Common myeloid progenitor, CD34-positive (primary cell): ENCODE measurements at regions of chr1 and their contacts with region 1.

Region 1: GRCh38 chr1:203038891-203039608 is 12.8 kb downstream of the PPFIA4 start:
- DNase-seq: peak; percentile 54 to 74 (median 64)
- H3K4me3 ChIP-seq: no peak overlapping the region
- H3K27ac ChIP-seq: no peak overlapping the region
- H3K4me1 ChIP-seq: peaks cover 0 to 26% (median 16%) of the 10 kb centered on the region in 4 experiments
- H3K27me3 ChIP-seq: peaks cover 0 to 13% (median 0%) of the 10 kb centered on the region in 5 experiments

Region 2: DNA sequence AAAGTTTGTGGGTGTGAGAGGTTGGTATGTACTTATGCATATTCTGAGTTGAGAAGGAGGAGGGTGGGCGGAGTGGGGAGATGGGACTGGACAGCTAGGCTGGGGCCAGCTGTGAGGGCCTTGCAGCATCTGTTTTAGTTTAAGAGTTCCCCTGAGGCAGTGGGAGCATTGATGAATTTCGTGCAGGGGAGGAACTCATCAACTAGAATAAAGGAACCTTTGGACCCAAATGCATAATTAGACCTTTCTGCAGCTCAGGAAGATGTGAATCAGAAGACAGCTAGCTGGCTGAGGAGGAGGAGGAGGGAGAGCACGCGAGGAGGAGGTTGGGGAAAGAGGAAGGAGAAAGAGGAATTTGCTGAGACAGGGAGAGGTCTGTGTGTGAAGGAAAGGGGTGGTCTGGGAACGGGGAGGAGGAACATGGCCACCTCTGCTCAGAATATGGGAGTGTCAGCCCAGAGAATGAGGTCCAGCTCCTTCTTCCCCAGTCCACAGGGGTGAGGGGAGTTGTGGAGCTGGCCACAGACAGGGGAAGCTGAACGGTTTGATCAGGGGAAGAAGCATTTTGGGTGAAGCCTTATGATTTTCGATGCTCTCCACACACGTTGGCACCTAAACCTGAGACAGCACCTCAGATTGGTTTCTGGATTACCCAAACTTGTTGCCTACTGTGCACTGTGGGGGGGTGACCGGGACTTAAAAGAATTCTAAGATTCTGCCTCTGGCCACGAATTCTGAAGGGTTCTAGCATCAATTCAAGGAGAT is 19.0 kb after region 1 on chr1:
- CTCF ChIA-PET with region 1: interaction called, 88 read pairs
- POLR2A ChIA-PET with region 1: no interaction called
- DNase-seq: peak in 1 of 3 donors; percentile 10
- H3K4me3 ChIP-seq: no peak overlapping the region
- H3K27ac ChIP-seq: no peak overlapping the region
- H3K4me1 ChIP-seq: peaks cover 0 to 28% (median 19%) of the 10 kb centered on the region in 4 experiments
- H3K27me3 ChIP-seq: peaks cover 0 to 1% (median 0%) of the 10 kb centered on the region in 5 experiments

Region 3: DNA sequence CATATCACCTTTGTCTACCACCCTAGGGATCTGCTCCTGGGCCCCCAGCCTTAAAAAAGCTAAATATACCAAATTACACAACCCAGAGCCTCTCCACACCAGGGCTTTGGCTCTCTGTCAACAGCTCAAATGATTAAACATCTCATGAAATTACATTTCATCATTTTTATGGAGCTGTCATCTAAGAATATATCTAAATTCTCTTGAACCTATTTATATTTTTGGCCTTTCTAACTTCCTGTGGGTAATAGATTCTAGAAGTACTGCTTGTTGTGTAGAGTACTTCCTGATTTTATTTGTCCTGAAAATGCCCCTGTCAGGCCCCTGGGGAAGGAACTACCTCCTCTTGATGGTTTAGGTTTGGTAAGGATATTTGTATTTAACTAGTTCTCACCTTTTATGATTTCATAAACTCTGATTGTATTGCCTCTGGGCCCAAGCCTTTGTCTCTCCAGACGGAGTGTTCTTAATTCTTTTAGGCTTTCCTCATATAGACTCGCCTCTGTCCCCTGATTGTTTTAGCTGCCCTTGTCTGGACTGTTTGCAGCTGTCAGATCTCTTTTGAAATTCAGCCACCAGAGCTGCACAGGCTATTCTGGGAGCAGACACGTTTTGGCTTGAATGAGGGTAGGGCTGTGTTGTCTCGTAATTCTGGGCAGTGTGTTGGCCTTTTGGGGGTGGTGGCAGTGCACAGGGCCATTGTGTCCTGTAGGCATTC is 30.1 kb after region 1 on chr1:
- CTCF ChIA-PET with region 1: interaction called, 15 read pairs
- POLR2A ChIA-PET with region 1: no interaction called
- DNase-seq: peak in 2 of 3 donors; percentile 54 to 55
- H3K4me3 ChIP-seq: no peak overlapping the region
- H3K27ac ChIP-seq: no peak overlapping the region
- H3K4me1 ChIP-seq: peaks cover 1 to 19% (median 15%) of the 10 kb centered on the region in 4 experiments
- H3K27me3 ChIP-seq: peaks cover 0 to 16% (median 0%) of the 10 kb centered on the region in 5 experiments

Region 4: DNA sequence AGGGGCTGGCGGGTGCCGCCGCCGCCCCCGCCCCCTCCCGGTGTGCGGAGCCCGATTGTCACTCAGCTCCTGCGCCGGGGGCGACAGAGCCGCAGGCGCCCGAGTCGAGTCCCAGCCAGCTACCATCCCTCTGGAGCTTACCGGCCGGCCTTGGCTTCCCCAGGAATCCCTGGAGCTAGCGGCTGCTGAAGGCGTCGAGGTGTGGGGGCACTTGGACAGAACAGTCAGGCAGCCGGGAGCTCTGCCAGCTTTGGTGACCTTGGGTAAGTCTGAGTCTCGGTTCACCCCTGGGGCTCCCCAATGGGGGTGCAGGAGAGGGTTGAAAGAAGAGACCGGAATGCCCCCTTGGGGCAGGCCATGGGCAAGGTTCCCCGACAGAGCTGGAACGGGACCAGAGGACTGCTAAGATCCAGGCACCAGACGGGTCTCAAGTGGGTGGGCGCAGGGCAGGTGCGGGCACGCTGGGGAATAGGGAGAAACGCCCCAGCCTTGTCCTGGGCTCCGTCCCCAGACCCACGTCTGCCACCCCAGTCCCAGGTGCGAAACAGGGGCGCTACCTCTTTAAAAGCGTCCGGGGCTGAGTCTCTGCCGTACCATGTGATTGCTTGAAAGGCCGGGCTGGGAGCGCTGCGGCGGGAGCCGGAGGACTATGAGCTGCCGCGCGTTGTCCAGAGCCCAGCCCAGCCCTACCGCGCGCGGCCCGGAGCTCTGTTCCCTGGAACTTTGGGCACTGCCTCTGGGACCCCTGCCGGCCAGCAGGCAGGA is 88.8 kb after region 1 on chr1 and contains the start of gene ADORA1:
- CTCF ChIA-PET with region 1: interaction called, 60 read pairs
- POLR2A ChIA-PET with region 1: no interaction called
- DNase-seq: peak in 2 of 3 donors; percentile 33 to 48
- H3K4me3 ChIP-seq: peak within 1 kb of the TSS in 3 of 7 experiments; percentile 22 to 57 (median 50)
- H3K27ac ChIP-seq: no peak within 1 kb of the TSS
- H3K4me1 ChIP-seq: peaks cover 0 to 19% (median 8%) of the 10 kb centered on the region in 4 experiments
- H3K27me3 ChIP-seq: peaks cover 3 to 77% (median 45%) of the 10 kb centered on the region in 5 experiments

Region 5: GRCh38 chr1:203172128-203173010 is 133.3 kb after region 1 on chr1:
- CTCF ChIA-PET with region 1: interaction called, 164 read pairs
- POLR2A ChIA-PET with region 1: interaction called, 9 read pairs
- DNase-seq: peak; percentile 42 to 61 (median 43)
- H3K4me3 ChIP-seq: no peak overlapping the region
- H3K27ac ChIP-seq: no peak overlapping the region
- H3K4me1 ChIP-seq: peaks cover 0 to 13% (median 2%) of the 10 kb centered on the region in 4 experiments
- H3K27me3 ChIP-seq: peaks cover 0 to 5% (median 0%) of the 10 kb centered on the region in 5 experiments

Region 6: DNA sequence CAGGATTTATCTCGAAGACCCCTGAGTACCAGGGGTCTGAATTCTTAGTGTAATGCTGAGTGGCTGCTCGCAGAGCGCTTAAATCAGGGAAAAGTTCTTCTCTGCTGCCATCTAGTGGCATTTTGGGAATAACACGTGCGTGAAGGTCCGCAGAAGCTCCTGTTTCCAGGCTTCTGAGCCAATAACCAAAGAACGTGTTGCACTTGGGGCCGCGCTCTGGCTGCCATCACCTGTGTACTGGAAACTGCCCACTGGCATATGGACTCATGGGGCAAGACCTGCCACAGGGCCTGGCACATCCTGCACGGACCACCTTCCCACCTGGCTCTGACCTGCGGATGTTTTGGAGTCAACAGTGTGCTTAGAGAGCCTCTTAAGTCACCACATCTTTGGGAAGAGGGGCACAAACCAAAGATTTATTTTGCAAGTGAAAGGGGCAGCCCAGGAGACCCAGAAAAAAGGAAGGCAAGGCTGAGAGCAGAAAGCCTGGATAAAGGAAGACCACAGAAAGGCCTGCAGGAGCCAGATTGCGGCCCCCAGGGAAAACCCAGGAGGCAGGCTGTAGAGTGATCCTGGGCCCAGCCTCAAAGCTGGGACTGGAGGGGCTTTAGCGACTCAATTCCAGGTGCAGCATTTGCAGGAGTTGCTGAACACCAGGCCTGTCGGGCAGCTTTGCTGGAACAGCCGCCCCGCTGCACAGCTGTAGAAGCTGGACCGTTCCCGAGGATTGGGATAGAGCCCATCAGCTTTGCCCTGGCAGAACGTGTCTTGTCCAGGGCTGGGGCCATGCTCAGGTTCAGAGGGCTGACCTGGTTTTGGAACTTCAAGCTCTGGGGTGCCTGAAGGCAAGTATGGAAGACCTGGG is 177.5 kb after region 1 on chr1:
- CTCF ChIA-PET with region 1: interaction called, 95 read pairs
- POLR2A ChIA-PET with region 1: interaction called, 4 read pairs
- DNase-seq: peak; percentile 74 to 86 (median 77)
- H3K4me3 ChIP-seq: no peak overlapping the region
- H3K27ac ChIP-seq: no peak overlapping the region
- H3K4me1 ChIP-seq: peaks cover 0 to 19% (median 9%) of the 10 kb centered on the region in 4 experiments
- H3K27me3 ChIP-seq: peaks cover 0 to 13% (median 0%) of the 10 kb centered on the region in 5 experiments